ENCODE measurements at regions of chr7 and their contacts with region 1.

Region 1: DNA sequence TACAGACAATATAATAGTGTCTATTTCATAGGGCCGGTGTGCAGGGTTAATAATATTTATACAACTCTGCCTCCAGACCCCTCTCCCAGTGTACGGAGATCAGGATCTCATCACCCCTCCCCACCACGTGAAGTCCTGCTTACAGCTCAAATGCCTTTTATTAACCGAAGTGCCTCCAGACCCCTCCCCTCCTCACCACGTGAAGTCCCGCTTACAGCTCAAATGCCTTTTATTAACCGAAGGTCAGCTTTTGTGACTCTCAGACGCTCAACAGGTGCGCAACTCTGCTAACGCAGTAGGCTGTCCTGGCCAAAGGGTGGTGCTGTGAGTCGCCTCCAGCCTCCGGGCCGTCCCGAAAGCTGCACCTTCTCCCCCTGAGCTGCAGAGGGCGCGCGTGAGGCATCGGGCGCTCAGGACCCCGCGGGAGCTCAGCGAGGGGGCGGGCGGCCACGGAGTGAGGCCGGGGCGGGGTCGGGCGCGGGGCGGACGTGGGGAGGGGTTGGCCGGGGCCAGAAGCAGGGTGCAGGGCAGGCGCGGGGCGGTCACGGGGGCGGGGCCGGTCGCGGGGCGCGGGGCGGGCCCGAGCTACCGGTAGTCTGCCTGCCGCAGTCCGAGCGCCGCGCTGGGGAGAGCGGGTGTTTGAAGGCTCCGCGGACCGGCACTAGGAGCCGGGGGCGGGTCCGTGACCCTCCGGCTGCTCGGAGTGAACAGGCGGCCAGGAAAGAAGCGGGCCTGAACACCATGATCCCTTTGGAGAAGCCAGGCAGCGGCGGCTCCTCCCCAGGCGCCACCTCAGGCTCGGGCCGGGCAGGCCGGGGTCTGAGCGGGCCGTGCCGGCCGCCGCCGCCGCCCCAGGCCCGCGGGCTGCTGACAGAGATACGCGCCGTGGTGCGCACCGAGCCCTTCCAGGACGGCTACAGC is at the start of gene STK17A:
- DNase-seq: peak; percentile 99
- H3K4me3 ChIP-seq: peak within 1 kb of the TSS; percentile 70 to 98
- H3K27ac ChIP-seq: peak within 1 kb of the TSS; percentile 83 to 88
- H3K4me1 ChIP-seq: peaks cover 15 to 20% of the 10 kb centered on the region in 2 experiments; a peak in 3 of 4 replicates
- H3K27me3 ChIP-seq: no peaks in the 10 kb centered on the region
- CTCF ChIP-seq: peak; percentile 100
- EP300 ChIP-seq: peak in 1 of 2 experiments; percentile 3; a peak in 1 of 4 replicates
- RAD21 ChIP-seq: peak; percentile 96
- polyA plus RNA-seq, gene STK17A: 47.8 and 52.0 TPM in 2 replicates

Region 2: DNA sequence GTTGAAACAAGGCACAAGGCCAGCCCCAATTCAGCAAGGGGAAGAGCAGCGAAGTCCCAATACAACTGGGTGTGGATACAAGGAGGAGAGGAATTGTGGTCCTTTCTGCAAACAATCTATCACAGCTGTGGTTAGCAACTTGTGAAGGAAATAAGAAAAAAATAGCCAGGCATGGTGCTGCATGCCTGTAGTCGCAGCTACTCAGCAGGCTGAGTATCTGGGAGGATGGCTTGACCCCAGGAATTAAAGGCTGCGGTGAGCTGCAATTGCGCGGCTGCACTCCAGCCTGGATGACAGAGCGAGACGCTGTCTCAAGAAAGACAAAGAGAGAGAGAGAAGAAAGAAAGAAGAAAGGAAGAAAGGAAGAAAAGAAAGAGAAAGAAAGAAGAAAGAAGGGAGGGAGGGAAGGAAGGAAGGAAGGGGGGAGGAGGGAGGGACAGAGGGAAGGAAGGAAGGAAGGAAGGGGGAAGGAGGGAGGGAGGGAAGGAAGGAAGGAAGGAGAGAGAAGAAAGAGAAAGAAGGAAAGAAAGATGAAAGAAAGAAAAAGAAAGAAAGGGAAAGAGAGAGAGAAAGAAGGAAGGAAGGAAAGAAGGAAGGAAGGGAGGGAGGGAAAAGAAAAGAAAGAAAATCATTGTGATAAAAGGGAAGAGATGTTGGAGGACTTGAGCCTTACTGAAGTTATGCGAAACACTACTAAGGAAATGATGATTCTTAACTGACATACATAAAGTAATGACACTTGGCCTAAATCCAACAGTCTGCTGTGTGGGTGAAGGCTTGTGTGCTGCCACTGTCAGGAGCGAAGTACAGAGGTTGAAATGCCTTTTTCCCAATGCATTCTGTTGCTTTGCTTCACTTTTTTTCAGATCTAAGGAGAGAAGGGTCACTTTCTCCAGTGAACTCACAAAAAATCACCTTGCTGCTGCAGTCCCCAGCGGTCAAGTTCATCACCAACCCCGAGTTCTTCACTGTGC is 116.9 kb before region 1 on chr7:
- CTCF ChIA-PET with region 1: interaction called, 12 read pairs
- POLR2A ChIA-PET with region 1: interaction called, 3 read pairs
- DNase-seq: peak; percentile 51
- H3K4me3 ChIP-seq: no peak overlapping the region
- H3K27ac ChIP-seq: no peak overlapping the region
- H3K4me1 ChIP-seq: peaks cover 0 to 3% of the 10 kb centered on the region in 2 experiments; a peak in 1 of 4 replicates
- H3K27me3 ChIP-seq: peaks cover 30% of the 10 kb centered on the region; the same call in 1 of the 2 replicates
- CTCF ChIP-seq: no peak
- EP300 ChIP-seq: no peak
- RAD21 ChIP-seq: no peak

Region 3: DNA sequence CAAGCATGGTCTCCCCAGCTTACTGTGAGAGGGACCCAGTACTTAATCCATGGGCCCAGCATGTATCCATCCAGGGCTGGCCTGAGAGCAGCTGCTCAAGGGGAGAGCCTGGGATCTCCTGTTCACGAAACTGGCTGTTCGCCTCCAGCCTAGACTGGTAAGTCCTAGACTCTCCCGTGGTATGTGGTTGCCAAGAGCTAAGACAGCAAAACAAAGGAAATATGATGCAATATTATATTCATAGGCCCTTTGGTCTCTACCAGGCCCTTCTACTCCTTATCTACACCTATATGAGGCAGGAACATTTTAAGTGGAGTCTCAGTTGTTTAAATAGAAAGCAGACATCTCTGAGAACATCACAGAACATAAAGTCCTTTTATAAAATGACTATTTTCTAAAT is 28.8 kb before region 1 on chr7:
- CTCF ChIA-PET with region 1: interaction called, 81 read pairs
- POLR2A ChIA-PET with region 1: no interaction called
- DNase-seq: no peak
- H3K4me3 ChIP-seq: no peak overlapping the region
- H3K27ac ChIP-seq: no peak overlapping the region
- H3K4me1 ChIP-seq: no peaks in the 10 kb centered on the region
- H3K27me3 ChIP-seq: peaks cover 61% of the 10 kb centered on the region
- CTCF ChIP-seq: no peak
- EP300 ChIP-seq: no peak
- RAD21 ChIP-seq: no peak

Region 4: DNA sequence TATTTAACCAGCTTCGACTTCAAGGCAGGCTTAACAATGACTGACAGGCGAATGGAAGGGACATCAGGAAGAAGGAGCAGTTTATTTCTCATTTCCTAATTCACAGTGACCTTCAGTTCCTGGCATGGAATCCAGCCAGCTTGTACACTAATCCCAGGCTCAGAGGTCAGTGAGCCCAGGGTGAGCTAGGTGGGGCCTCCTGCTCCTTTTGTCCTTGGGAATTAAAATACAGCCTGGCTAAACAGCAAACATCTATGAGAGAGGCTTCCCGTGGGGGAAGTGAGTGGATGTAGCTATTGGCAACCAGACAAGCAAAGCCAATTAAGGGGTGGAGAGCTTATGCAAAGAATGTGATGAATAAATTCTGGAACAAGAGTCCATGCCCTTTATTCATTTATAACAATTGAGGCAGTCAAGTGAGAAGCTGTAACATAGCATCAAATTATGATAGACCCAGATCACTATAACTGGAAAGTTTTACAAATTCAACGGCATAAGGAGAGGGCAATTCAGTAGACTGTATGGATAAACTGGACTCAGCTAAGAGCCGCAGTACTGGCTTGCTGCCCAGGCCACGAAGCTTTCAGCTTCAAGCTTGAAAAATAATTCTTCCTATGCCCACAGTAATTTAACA is 57.2 kb after region 1 on chr7:
- CTCF ChIA-PET with region 1: interaction called, 45 read pairs
- POLR2A ChIA-PET with region 1: no interaction called
- DNase-seq: no peak
- H3K4me3 ChIP-seq: no peak overlapping the region
- H3K27ac ChIP-seq: peak overlapping the region; percentile 65 to 100
- H3K4me1 ChIP-seq: peaks cover 22 to 57% of the 10 kb centered on the region in 2 experiments
- H3K27me3 ChIP-seq: no peaks in the 10 kb centered on the region
- CTCF ChIP-seq: no peak
- EP300 ChIP-seq: peak in 1 of 2 experiments; percentile 75; a peak in 1 of 4 replicates
- RAD21 ChIP-seq: no peak

Region 5: DNA sequence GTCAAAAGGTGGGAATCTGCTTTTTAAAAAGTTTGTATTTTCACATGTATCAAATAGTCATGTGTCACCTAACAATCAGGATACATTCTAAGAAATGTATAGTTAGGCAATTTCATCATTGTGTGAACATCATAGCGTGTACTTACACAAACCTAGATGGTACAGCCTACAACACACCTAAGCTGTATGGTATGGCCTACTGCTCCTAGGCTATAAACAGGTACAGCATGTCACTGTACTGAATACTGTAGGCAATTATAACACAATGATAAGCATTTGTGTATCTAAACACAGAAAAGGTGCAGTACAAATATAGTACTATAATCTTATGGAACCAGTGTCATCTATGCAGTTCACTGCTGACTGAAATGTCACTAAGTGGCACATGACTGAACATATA is 128.7 kb after region 1 on chr7:
- CTCF ChIA-PET with region 1: interaction called, 144 read pairs
- POLR2A ChIA-PET with region 1: interaction called, 3 read pairs
- DNase-seq: no peak
- H3K4me3 ChIP-seq: no peak overlapping the region
- H3K27ac ChIP-seq: no peak overlapping the region
- H3K4me1 ChIP-seq: no peaks in the 10 kb centered on the region
- H3K27me3 ChIP-seq: no peaks in the 10 kb centered on the region
- CTCF ChIP-seq: no peak
- EP300 ChIP-seq: no peak
- RAD21 ChIP-seq: no peak

Region 6: DNA sequence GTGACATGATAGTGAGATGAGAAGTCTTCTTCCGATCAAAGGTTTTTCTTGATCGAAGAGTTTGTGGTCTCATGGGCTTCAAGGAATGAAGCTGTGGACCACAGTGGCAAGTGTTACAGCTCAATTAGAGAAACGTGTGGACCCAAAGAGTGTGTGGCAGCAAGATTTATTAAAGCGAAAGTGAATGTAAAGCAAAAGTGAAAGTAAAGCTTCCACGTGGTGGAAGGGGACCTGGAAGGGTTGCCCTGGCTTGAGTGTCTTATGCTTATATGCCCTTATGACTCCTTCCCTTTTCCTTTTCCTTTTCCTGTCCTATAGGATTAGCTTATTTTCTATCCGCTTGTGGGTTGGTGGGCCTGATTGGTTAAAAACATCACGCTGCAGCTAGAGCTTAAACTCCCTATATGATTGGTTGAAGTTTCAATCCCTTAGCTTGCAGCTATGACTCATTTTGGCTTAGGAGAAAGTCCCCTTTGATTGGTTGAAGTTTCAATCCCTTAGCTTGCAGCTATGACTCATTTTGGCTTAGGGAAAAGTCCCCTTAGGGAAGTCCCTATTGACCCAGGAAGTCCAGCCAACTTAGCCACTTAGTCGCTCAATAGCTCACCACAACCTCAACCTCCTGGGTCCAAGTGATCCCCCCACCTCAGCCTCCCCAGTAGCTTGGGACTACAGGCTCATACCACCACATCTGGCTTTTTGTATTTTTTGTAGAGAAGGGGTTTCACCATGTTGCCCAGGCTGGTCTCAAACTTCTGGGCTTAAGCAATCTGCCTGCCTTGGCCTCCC is 251.9 kb after region 1 on chr7:
- CTCF ChIA-PET with region 1: interaction called, 157 read pairs
- POLR2A ChIA-PET with region 1: interaction called, 3 read pairs
- DNase-seq: no peak
- H3K4me3 ChIP-seq: no peak overlapping the region
- H3K27ac ChIP-seq: no peak overlapping the region
- H3K4me1 ChIP-seq: no peaks in the 10 kb centered on the region; a peak in 1 of 4 replicates
- H3K27me3 ChIP-seq: no peaks in the 10 kb centered on the region; the same call in 1 of the 2 replicates
- CTCF ChIP-seq: no peak
- EP300 ChIP-seq: no peak
- RAD21 ChIP-seq: no peak